Activated T-helper 1 cell treated with anti-CD3 and anti-CD28 coated beads, Interleukin-12 subunit alpha, Interleukin-12 subunit beta, Interleukin-2, Interleukin-4 antibody, amounts not matched to agents 30 ng/mL and 10 ng/mL and 1 ng/mL, durations not matched to agents 14 hours and 24 hours and 36 hours (primary cell): ENCODE measurements at regions of chr13 and their contacts with region 1.

Region 1: DNA sequence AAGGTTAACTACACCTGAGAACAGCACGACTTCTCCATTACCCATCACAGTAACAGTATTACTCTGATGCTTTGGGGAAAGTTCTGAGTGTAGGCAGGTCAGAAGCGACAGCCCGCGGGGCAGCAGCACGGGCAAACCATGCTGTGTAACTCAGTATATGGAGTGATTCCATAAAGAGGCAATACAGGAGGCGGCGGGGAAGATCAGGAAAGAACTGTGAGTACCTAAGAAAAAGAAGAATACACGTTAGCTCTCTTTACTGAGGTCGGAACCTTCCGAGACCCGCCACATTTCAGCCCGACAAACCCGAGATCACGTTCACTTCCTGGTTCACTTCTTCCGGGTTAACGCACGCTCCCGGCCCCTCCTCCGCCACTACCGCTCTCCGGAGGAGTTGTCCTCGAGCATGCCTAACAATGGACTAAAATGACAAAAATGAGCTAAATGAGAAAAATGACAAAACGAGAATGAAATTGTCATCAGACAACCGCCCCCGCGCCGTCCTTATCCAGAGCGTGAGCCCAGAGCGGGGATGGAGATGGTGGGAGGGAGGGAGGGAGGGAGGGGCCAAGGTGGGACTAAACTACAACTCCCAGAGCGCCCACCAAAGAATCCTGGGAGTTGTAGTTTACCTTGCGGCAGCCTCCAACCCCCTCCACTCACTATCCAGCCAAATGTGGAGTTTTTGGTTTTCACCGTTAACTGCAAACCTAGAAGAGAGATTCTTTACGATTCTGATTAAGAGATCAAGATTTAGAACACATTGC is at the start of gene MTRF1:
- DNase-seq: peak; percentile 72
- H3K4me3 Mint-ChIP-seq: peak within 1 kb of the TSS; percentile 95
- H3K27ac Mint-ChIP-seq: peak within 1 kb of the TSS; percentile 100
- H3K4me1 Mint-ChIP-seq: peaks cover 12% of the 10 kb centered on the region
- H3K27me3 Mint-ChIP-seq: no peaks in the 10 kb centered on the region
- total RNA-seq, gene MTRF1: 17.5 and 20.2 TPM in 2 replicates

Region 2: GRCh38 chr13:40770934-40771618 is 492.4 kb before region 1 on chr13 and contains the start of gene MRPS31:
- intact Hi-C with region 1: loop called (anchors 1 kb)
- DNase-seq: peak; percentile 93
- H3K4me3 Mint-ChIP-seq: peak within 1 kb of the TSS; percentile 99
- H3K27ac Mint-ChIP-seq: peak within 1 kb of the TSS; percentile 98
- H3K4me1 Mint-ChIP-seq: peaks cover 29% of the 10 kb centered on the region
- H3K27me3 Mint-ChIP-seq: no peaks in the 10 kb centered on the region
- total RNA-seq, gene MRPS31: 41.6 and 42.6 TPM in 2 replicates

Region 3: GRCh38 chr13:41145146-41145908 is 118.1 kb before region 1 on chr13:
- intact Hi-C with region 1: no loop called
- DNase-seq: no peak
- H3K4me3 Mint-ChIP-seq: no peak overlapping the region
- H3K27ac Mint-ChIP-seq: no peak overlapping the region
- H3K4me1 Mint-ChIP-seq: no peaks in the 10 kb centered on the region
- H3K27me3 Mint-ChIP-seq: no peaks in the 10 kb centered on the region

Region 4: GRCh38 chr13:41216160-41216559 is 47.3 kb before region 1 on chr13:
- intact Hi-C with region 1: no loop called
- DNase-seq: no peak
- H3K4me3 Mint-ChIP-seq: no peak overlapping the region
- H3K27ac Mint-ChIP-seq: no peak overlapping the region
- H3K4me1 Mint-ChIP-seq: no peaks in the 10 kb centered on the region
- H3K27me3 Mint-ChIP-seq: peaks cover 3% of the 10 kb centered on the region

Region 5: DNA sequence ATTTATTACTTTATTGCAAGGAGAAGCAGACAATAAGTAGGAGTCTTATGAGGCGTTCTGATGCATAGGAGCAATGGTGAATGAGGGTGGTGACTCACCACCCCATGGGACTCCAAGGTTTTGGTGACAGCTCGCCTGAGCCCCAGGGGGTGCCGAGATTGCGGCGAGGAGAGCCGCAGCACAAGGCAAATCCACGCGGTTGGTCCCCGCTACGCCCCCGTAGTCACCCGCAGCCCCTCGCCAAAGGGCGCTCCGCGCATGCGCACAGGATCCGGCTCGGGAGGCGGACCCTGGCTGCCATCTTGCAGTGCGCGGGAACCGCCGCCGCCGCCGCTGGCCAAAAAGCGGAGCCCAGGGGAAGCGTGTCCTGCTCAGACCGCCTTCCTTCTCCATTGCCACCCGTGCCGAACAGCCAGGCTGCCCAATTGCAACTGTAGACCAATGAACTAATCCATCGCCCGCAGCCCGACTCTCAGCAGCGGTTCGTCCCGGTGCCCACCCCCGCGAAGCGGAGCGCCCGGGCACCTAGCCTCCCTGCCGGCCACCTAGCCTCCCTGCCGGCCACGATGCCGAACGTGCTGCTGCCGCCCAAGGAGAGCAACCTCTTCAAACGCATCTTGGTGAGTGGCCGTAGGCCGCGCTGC is 47.6 kb after region 1 on chr13 and contains the start of gene NAA16:
- intact Hi-C with region 1: loop called (anchors 1 kb)
- DNase-seq: peak; percentile 92
- H3K4me3 Mint-ChIP-seq: peak within 1 kb of the TSS; percentile 94
- H3K27ac Mint-ChIP-seq: peak within 1 kb of the TSS; percentile 83
- H3K4me1 Mint-ChIP-seq: peaks cover 38% of the 10 kb centered on the region
- H3K27me3 Mint-ChIP-seq: peaks cover 2% of the 10 kb centered on the region
- total RNA-seq, gene NAA16: 31.9 and 33.4 TPM in 2 replicates

Region 6: DNA sequence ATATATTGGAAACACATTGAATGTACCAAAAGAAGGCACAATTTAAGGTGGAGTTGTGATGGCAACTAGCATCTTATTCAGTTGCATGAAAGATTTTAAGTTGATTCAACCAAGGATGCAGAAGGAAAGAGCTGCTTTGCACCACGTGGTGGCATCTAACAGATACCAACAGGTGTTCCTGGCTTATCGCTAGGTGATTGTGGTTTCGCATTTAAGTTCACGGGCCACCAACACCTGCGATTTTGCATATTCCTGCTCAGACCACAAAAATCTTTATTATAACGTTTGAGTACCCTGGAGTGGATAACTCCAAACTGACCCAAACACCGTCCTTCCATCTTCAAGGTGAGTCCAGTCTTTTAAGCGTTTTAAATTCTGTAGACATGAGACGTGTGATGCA is 239.2 kb after region 1 on chr13:
- intact Hi-C with region 1: loop called (anchors 1 kb)
- DNase-seq: no peak
- H3K4me3 Mint-ChIP-seq: no peak overlapping the region
- H3K27ac Mint-ChIP-seq: no peak overlapping the region
- H3K4me1 Mint-ChIP-seq: peaks cover 58% of the 10 kb centered on the region
- H3K27me3 Mint-ChIP-seq: peaks cover 2% of the 10 kb centered on the region